ENCODE measurements at regions of chr5 and their contacts with region 1.

Region 1: DNA sequence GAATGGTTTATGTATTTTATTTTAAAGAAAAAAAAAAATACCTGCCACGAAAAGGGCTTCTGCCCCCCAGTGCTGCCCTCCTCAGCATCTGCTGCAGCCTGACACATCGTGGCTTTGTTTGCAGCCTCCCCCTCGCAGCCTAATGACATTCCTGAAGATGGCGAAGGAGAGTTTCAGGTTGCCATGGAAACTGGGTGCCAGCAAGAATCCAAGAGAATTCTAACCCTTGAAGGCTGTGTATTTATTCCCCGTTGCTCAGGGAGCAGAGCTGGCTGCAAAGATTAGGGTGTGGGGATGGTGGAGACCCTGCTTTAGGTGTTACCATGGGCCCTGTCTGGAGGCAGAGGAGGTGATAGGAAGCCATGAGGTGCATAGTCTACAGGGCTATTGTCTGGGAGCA is 126.6 kb downstream of the NSG2 start:
- DNase-seq: peak in 8 of 10 donors; percentile 38 to 72 (median 52)
- H3K4me3 ChIP-seq: no peak overlapping the region
- H3K27ac ChIP-seq: peak overlapping the region in 28 of 59 donors; percentile 1 to 66 (median 46)
- H3K27me3 ChIP-seq: no peaks in the 10 kb centered on the region
- CTCF ChIP-seq: peak in 1 of 56 donors; percentile 6

Region 2: DNA sequence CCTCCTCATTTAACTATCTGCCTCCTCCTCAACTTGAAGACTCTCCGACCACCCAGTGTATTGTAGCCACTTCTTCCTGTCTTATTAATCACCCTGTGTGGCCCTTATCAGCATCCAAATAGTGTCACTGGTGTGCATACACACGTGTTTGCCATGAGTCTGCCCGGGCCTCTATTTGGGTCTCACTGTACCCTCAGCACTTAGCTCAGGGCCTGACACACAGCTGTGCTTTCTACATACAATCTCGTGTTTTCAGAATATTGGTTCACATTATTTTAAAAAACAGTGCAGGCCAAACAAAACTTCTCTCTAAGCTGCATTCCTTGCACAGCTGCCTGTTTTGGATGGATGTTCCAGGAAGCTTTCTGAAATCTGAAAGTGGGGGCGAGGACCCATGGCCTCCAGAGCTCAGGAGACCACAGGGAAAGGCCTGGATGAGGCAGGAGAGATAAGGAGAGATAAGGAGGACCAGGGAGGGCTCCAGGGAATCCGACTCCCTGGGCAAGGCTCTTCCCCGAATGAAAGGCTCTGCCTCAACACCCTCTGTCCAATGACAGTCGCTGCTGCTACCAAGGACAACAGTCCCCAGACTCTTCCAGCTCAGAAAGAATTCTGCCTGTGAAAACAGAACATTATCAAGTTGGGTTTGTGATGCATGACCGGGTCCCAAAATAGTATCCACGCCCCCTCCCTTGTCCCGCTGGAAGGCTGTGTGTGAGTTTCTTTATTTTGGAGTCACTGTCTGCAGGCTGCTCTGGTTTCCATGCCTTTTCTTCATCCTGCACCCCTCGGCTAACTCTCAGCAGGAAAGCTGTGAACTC is 129.0 kb after region 1 on chr5:
- intact Hi-C with region 1: loop called (anchors 10 kb)
- DNase-seq: peak in 3 of 10 donors; percentile 49 to 65 (median 52)
- H3K4me3 ChIP-seq: no peak overlapping the region
- H3K27ac ChIP-seq: peak overlapping the region in 15 of 59 donors; percentile 6 to 66 (median 38)
- H3K27me3 ChIP-seq: no peaks in the 10 kb centered on the region
- CTCF ChIP-seq: no peak

Region 3: DNA sequence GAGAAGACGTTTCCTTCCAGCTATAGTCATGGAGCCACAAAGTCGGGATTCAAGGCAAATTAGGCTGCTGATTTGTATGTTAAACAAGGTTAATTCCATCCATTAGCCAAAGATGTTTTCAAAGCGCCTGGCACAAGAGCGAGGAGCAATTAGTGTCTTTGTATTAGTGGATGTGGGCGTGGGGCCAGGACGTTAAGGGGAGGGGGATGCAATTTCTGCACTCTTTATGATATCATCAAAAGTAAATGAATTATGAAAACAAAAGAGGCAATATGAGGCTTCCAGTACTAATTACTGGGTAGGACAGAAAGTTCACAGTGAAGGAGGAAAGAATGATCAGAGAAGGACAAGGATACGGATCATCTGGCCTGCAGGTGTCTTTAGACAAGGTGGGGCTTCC is 321.4 kb after region 1 on chr5:
- intact Hi-C with region 1: no loop called
- DNase-seq: no peak
- H3K4me3 ChIP-seq: no peak overlapping the region
- H3K27ac ChIP-seq: no peak overlapping the region
- H3K27me3 ChIP-seq: no peaks in the 10 kb centered on the region
- CTCF ChIP-seq: no peak